Breast epithelium (tissue), 4 donors: ENCODE measurements at regions of chr3 and their contacts with region 1.

Region 1: DNA sequence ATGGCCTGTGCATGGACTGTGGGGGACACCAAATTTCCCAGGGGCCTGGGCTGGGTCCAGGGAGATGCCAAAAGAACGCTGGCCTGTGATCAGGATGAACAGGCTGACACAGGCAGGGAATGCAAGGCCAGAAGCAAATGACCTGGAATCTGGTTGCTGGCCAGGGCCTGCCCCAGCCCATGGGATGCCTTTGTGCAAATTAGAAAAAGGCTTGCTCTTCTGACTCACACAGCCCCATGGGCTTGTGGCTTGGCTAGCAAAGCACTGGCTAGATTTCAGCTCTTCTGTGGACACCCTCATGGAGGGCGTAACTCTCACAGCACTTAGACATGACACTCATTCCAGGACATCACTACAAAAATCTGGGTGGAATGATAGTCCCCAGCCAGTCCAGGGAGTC is 356.0 kb downstream of the SHQ1 start:
- DNase-seq: peak; percentile 75 to 95
- H3K4me3 ChIP-seq: no peak overlapping the region
- H3K27ac ChIP-seq: peak overlapping the region in 1 of 2 donors; percentile 32
- H3K4me1 ChIP-seq: peaks cover 3% of the 10 kb centered on the region in 2 donors
- H3K27me3 ChIP-seq: no peaks in the 10 kb centered on the region
- CTCF ChIP-seq: no peak
- POLR2A ChIP-seq: no peak

Region 2: GRCh38 chr3:72339116-72340030 is 152.9 kb before region 1 on chr3:
- intact Hi-C with region 1: loop called (anchors 5 kb)
- DNase-seq: peak in 1 of 2 donors; percentile 40
- H3K4me3 ChIP-seq: no peak overlapping the region
- H3K27ac ChIP-seq: peak overlapping the region in 1 of 2 donors; percentile 55
- H3K4me1 ChIP-seq: no peaks in the 10 kb centered on the region
- H3K27me3 ChIP-seq: no peaks in the 10 kb centered on the region
- CTCF ChIP-seq: no peak
- POLR2A ChIP-seq: no peak